BJ (cell line): ENCODE measurements at regions of chr3 and their contacts with region 1.

Region 1: DNA sequence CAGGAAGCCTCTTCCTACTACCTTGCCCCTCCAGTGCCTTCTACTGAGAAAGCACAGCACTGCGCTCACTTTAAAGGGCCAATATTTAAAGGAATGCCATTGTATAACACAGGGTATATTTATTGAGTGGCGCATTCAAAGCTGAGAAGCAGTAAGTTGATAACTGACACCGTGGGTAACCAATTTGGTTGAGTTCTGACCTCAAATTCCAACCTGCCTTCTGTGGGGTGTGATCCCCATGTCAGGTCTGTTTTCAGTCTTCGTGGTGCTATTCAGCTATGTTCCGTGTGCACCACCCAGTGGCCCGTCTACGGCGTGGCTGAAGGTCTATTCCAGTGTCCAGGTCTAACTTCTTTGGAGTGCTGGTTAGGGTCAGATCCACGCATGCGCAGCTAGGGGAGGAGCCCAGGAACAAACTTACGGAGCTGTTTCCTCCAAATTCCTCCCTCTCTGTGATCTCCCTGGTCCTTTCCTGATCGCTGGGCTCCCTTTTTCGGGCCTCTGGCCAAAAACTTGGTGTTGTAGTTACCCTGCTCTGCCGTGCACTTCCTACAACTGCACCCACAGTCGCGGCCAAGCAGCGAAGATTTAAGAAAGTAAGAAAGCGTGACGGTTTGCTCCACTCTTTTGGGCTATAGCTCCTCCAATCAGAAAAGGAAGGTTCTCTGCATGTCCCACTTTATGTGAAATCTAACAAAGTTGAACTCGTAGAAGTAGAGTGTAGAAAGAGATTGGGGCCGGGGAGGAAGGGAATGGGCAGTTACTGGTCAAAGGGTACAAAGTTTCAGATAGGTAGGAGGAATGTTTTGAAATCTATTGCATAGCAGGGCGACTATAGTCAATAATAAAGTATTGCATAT is 7.7 kb downstream of the LRRC2 start:
- DNase-seq: peak; percentile 67
- H3K4me3 ChIP-seq: peak overlapping the region; percentile 39
- H3K27me3 ChIP-seq: no peaks in the 10 kb centered on the region
- CTCF ChIP-seq: peak; percentile 88

Region 2: DNA sequence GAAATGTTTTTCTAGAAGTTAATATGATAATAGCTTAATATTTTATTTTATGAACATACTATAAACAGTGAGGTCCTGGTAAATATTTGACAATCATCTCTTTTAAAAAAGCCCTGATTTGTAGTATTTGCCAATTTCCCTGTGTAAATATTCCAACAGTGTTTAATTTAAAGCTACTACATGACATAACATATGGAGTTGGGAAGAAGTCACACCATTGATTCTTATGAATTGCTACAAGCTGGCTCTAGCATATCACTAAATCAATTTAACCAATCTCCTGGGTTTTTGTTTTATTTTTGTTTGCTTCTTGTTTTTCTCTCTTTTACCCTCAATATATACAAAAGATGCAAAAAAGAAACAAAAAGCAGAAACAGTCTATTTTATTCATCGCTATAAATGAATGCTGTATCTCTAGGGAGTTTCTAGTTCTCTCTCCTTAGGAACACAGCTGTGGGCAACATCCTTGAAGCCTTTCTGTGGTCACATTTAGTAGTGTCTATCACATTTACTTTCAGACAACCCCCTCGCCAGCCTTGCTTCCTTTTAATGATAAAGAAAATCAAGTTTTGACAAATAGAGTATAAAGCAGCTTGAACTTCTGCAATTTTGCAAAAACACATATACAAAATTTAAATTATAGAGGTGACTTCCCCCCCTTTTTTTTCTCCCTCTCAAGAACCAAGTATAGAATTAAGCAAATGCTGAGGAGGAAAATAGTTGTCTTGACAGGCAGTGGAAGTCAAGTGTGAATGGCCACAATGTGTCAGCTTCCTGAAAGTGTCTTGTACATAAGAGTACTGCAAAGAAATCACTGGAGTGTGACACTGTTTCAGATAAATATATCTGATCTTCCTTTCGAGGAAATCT is 371.7 kb before region 1 on chr3:
- CTCF ChIA-PET with region 1: no interaction called
- POLR2A ChIA-PET with region 1: no interaction called
- DNase-seq: no peak
- H3K4me3 ChIP-seq: no peak overlapping the region
- H3K27me3 ChIP-seq: peaks cover 2% of the 10 kb centered on the region; the same call in 1 of the 2 replicates
- CTCF ChIP-seq: no peak

Region 3: GRCh38 chr3:46482632-46483350 is 75.6 kb before region 1 on chr3:
- CTCF ChIA-PET with region 1: interaction called, 182 read pairs
- POLR2A ChIA-PET with region 1: no interaction called
- DNase-seq: no peak
- H3K4me3 ChIP-seq: no peak overlapping the region
- H3K27me3 ChIP-seq: peaks cover under 1% of the 10 kb centered on the region; the same call in 1 of the 2 replicates
- CTCF ChIP-seq: no peak

Region 4: DNA sequence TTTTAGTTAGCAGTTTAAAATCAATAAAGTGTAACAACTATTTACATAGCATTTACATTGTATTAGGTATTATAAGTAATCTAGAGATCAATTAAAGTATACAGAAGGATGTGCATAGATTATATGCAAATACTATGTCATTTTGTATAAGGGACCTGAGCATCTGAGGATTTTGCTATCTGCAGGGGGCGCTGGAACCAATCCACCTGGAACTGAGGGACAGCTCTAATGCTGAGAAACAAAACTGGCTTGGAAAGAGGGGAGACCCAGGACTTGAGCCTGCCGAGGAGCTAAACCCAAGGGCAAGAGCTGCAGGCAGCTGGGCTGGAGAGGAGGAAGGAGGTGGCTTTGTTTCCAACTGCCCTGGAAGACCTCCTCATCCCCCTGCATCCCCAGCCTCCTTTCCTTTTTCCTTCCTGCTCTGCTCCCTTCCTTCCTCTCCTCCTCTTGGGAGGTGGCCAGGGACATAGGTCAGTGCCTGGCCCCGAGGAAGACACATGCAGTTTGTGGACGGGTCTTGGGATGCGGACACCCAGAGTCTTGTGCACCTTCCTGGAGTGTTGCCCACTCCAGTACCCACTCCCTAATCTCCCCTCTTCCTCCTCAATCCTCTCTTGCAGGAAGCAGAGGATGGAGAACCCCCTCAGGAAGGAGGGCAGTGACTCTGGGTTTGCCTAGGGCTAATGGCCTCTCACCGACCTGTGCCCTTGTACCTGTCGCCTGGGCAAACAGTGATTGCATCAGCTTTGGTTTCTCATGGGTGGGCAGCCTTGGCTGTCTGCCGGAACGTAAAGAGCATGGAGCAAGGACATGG is 61.5 kb before region 1 on chr3:
- CTCF ChIA-PET with region 1: interaction called, 182 read pairs
- POLR2A ChIA-PET with region 1: interaction called, 3 read pairs
- DNase-seq: no peak
- H3K4me3 ChIP-seq: no peak overlapping the region
- H3K27me3 ChIP-seq: no peaks in the 10 kb centered on the region
- CTCF ChIP-seq: peak; percentile 33; the same call in 1 of the 2 replicates

Region 5: GRCh38 chr3:46517016-46517793 is 41.2 kb before region 1 on chr3:
- CTCF ChIA-PET with region 1: interaction called, 3 read pairs
- POLR2A ChIA-PET with region 1: interaction called, 10 read pairs
- DNase-seq: peak; percentile 45
- H3K4me3 ChIP-seq: no peak overlapping the region
- H3K27me3 ChIP-seq: no peaks in the 10 kb centered on the region
- CTCF ChIP-seq: no peak